Activated CD4-positive, alpha-beta memory T cell treated with anti-CD3 and anti-CD28 coated beads for 36 hours (primary cell): ENCODE measurements at regions of chr9 and their contacts with region 1.

Region 1: GRCh38 chr9:99807276-99807852 is 14.3 kb upstream of the NR4A3 start:
- DNase-seq: peak; percentile 69
- H3K4me3 Mint-ChIP-seq: no peak overlapping the region
- H3K27ac Mint-ChIP-seq: no peak overlapping the region
- H3K4me1 Mint-ChIP-seq: peaks cover 25% of the 10 kb centered on the region
- H3K27me3 Mint-ChIP-seq: peaks cover 6% of the 10 kb centered on the region

Region 2: GRCh38 chr9:99266255-99267023 is 540.9 kb before region 1 on chr9:
- CTCF ChIA-PET with region 1: interaction called, 3 read pairs
- POLR2A ChIA-PET with region 1: no interaction called
- intact Hi-C with region 1: loop called (anchors 2 kb)
- DNase-seq: peak; percentile 78
- H3K4me3 Mint-ChIP-seq: no peak overlapping the region
- H3K27ac Mint-ChIP-seq: no peak overlapping the region
- H3K4me1 Mint-ChIP-seq: peaks cover 22% of the 10 kb centered on the region
- H3K27me3 Mint-ChIP-seq: peaks cover 3% of the 10 kb centered on the region

Region 3: GRCh38 chr9:99720455-99721050 is 86.8 kb before region 1 on chr9:
- CTCF ChIA-PET with region 1: no interaction called
- POLR2A ChIA-PET with region 1: no interaction called
- intact Hi-C with region 1: no loop called
- DNase-seq: no peak
- H3K4me3 Mint-ChIP-seq: peak overlapping the region; percentile 43
- H3K27ac Mint-ChIP-seq: peak overlapping the region; percentile 72
- H3K4me1 Mint-ChIP-seq: peaks cover 24% of the 10 kb centered on the region
- H3K27me3 Mint-ChIP-seq: no peaks in the 10 kb centered on the region

Region 4: GRCh38 chr9:99778308-99778707 is 29.1 kb before region 1 on chr9:
- CTCF ChIA-PET with region 1: no interaction called
- POLR2A ChIA-PET with region 1: no interaction called
- intact Hi-C with region 1: no loop called
- DNase-seq: peak; percentile 48
- H3K4me3 Mint-ChIP-seq: no peak overlapping the region
- H3K27ac Mint-ChIP-seq: no peak overlapping the region
- H3K4me1 Mint-ChIP-seq: peaks cover 8% of the 10 kb centered on the region
- H3K27me3 Mint-ChIP-seq: peaks cover 13% of the 10 kb centered on the region

Region 5: DNA sequence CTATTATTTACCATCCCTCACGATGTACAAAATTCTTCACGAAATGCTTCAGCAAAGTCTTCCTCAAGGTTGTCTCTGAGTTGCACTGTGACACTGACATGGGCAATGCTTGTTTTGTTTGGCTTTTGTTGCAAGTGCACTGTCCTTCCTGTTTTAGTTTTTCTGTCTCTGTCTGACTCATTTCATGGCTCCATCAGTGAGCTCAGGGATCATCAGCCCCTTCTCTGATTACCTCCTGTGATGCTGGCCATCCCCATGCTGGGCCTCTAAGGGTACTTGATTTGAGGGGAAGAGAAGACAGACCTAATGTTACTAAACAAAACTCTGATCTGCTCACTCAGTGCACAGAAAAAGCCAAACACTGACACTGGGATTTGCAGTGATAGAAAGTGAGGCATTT is 61.5 kb after region 1 on chr9:
- CTCF ChIA-PET with region 1: no interaction called
- POLR2A ChIA-PET with region 1: no interaction called
- intact Hi-C with region 1: loop called (anchors 1 kb)
- DNase-seq: no peak
- H3K4me3 Mint-ChIP-seq: no peak overlapping the region
- H3K27ac Mint-ChIP-seq: no peak overlapping the region
- H3K4me1 Mint-ChIP-seq: peaks cover 21% of the 10 kb centered on the region
- H3K27me3 Mint-ChIP-seq: no peaks in the 10 kb centered on the region

Region 6: GRCh38 chr9:99954819-99955218 is 147.5 kb after region 1 on chr9:
- CTCF ChIA-PET with region 1: no interaction called
- POLR2A ChIA-PET with region 1: no interaction called
- intact Hi-C with region 1: loop called (anchors 1 kb)
- DNase-seq: no peak
- H3K4me3 Mint-ChIP-seq: no peak overlapping the region
- H3K27ac Mint-ChIP-seq: peak overlapping the region; percentile 62
- H3K4me1 Mint-ChIP-seq: peaks cover 22% of the 10 kb centered on the region
- H3K27me3 Mint-ChIP-seq: no peaks in the 10 kb centered on the region

Region 7: DNA sequence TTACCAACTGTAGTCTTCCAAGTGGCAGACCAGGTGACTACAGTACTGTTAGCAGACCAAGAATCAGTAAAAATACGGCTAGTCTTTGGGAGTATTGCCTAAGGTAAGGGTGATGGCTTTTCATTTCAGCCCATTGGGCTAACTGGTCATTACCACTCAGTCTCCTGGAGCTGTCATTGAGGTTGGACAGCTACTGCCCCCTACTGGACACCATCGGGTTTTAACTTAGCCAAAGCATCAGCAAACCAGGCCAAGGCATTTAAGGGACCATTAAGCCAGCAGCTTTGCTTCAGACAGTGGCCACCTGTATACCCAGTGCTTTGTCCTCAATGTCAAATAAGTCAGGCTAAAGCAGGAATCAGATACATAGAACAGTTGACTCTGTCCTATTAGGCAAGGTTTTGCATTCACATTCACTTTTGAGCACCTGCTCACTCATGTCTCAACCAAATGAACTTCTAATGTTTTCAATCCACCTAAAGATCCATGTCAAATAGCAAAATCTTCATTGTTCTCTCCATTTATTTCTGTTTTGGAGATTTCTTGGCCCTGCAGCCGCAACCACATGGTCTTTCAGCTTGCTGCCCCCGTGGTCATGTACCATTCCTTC is 408.9 kb after region 1 on chr9:
- CTCF ChIA-PET with region 1: no interaction called
- POLR2A ChIA-PET with region 1: no interaction called
- intact Hi-C with region 1: loop called (anchors 5 kb)
- DNase-seq: peak; percentile 76
- H3K4me3 Mint-ChIP-seq: no peak overlapping the region
- H3K27ac Mint-ChIP-seq: no peak overlapping the region
- H3K4me1 Mint-ChIP-seq: peaks cover 2% of the 10 kb centered on the region
- H3K27me3 Mint-ChIP-seq: no peaks in the 10 kb centered on the region